ENCODE measurements at regions of chr4 and their contacts with region 1.

Region 1: DNA sequence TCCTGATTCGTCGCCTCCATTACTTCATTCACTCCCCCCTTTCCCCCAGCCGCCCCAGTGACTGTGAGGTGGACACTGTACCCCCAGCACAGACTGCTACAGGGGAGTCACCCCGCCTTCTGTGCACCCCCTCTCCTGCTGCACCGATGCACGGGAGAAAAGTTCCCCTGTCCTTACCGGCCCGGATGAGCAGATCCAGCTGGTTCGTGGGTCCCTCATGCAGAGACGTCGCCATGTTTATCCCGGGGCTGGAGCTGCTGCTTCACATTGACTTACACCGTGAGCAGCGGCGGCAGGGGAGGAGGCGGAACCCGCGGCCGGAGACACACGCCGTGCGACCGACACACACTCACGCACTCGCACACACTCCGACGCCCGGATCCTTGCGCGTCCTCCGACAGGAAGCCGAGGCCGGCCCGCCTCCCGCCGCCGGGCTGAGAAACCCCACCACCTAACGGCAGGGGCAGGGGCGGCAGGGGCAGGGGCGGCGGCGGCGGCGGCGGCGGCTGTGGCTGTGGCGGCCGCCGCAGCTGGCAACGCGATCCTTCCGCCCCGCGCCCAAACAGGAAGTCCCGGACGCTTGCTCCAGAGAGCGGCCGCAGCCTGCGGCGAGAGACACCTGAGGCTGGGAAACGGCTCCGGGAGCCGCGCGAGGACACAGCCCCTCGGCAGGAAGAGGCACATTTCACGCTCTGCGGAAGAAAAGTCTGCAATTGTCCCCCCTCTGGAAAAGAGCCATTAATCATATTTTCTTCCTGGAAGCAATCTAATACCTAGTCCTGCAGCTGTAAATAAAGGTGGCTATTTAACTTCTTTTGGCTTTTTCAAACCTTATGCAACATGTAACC is 68.6 kb downstream of the NOCT start:
- DNase-seq: peak; percentile 78
- H3K4me3 Mint-ChIP-seq: peak overlapping the region; percentile 86
- H3K27ac Mint-ChIP-seq: peak overlapping the region; percentile 98
- H3K4me1 Mint-ChIP-seq: peaks cover 28% of the 10 kb centered on the region
- H3K27me3 Mint-ChIP-seq: no peaks in the 10 kb centered on the region

Region 2: DNA sequence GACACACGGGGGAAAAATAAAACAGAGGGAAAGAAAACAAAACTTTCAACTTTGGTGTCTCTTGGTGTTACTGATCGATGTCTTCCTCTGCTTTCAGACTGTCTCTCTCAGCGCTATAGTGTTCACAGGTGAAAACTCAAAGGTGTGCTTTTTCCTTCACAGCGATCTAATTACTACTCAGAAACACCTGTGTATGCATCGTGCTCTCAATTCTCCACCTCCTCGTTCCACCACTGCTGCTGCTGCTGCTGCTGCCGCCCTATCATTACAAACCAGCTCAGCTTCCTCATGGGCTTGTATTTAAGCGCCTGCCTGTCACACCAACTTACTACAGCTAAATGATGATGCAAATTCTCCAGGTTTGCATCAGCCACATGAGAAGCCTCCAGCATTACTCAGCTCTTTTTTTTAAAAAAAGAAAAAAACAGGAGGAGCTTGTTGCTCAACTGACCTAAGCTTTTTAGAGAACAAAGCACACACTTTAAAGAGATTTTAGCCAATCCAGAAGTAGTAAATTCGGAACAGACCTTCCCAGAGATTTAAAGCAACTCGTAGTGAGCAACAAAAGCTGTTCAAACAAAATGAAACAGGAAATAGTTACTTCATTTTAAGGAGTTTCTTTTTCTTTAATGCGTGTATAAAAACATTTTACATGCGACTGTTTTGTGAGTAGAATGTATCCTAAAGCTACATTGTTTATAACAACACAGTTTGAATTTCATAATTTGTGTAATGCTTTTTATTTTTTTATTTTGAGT is 841.9 kb before region 1 on chr4 and contains the start of gene SLC7A11:
- intact Hi-C with region 1: loop called (anchors 5 kb)
- DNase-seq: peak; percentile 70
- H3K4me3 Mint-ChIP-seq: peak within 1 kb of the TSS; percentile 88
- H3K27ac Mint-ChIP-seq: peak within 1 kb of the TSS; percentile 83
- H3K4me1 Mint-ChIP-seq: peaks cover 32% of the 10 kb centered on the region
- H3K27me3 Mint-ChIP-seq: peaks cover 4% of the 10 kb centered on the region
- total RNA-seq, gene SLC7A11: 2.6 and 2.7 TPM in 2 replicates

Region 3: DNA sequence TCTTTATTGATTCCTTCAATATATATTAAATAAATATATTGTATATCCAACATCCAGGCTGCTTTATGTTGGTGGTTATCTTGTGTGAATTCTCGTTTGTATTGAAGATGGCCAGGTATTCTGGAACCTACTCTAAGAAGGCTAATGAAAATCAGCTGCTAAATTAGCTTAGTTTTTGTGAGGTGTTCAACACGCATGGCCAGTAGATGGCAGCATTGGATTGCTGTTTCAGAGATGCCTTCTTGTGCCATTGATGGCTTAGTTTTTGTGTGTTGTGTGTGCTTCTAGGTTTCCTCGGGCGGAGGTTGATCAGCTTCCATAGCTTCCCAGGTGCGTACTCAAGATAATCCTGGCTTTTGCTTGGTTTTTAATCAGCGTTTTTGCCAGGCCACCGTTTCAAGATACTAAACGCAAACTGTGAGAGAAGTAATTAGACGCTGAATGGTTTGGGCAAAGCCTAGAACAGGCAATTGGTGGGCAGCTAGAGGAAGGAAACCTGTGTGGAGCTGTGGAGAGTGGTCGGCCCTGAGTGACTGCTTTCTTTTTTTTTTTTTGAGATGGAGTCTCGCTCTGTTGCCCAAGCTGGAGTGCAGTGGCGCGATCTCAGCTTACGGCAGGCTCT is 53.5 kb before region 1 on chr4:
- intact Hi-C with region 1: loop called (anchors 1 kb)
- DNase-seq: peak; percentile 55
- H3K4me3 Mint-ChIP-seq: no peak overlapping the region
- H3K27ac Mint-ChIP-seq: no peak overlapping the region
- H3K4me1 Mint-ChIP-seq: peaks cover 15% of the 10 kb centered on the region
- H3K27me3 Mint-ChIP-seq: no peaks in the 10 kb centered on the region

Region 4: DNA sequence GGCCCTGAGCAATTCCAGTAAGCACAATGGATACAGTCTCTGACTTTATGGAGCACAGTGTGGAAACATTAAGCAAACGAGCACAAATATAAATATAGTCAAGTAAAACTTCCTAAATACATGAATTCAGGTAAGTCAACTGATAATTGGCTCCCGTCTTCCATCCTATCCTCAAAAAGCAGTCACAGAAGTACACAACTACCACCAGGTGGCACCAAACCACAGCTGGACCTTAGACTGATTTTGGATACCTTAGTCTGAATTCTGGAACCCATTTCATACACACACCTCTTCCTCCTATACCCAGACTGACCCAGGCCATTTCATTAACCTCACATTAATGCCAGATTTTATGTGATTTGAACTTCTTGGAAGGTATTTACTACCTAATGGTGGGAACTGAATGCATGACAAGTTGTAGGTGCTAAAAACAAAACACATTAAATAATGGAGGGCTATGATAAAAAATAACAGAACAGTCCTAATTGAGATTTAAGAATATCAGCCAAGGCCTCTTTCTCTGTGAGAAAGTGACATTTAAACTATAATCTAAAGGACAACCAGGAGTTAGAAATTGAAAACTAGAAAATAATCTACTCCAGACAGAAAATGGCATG is 15.3 kb after region 1 on chr4:
- intact Hi-C with region 1: loop called (anchors 2 kb)
- DNase-seq: peak; percentile 54
- H3K4me3 Mint-ChIP-seq: no peak overlapping the region
- H3K27ac Mint-ChIP-seq: no peak overlapping the region
- H3K4me1 Mint-ChIP-seq: no peaks in the 10 kb centered on the region
- H3K27me3 Mint-ChIP-seq: no peaks in the 10 kb centered on the region

Region 5: GRCh38 chr4:139301113-139301820 is 217.1 kb after region 1 on chr4 and contains the start of gene NAA15:
- intact Hi-C with region 1: loop called (anchors 1 kb)
- DNase-seq: peak; percentile 97
- H3K4me3 Mint-ChIP-seq: peak within 1 kb of the TSS; percentile 95
- H3K27ac Mint-ChIP-seq: peak within 1 kb of the TSS; percentile 97
- H3K4me1 Mint-ChIP-seq: peaks cover 69% of the 10 kb centered on the region
- H3K27me3 Mint-ChIP-seq: no peaks in the 10 kb centered on the region
- total RNA-seq, gene NAA15: 104 and 110 TPM in 2 replicates

Region 6: DNA sequence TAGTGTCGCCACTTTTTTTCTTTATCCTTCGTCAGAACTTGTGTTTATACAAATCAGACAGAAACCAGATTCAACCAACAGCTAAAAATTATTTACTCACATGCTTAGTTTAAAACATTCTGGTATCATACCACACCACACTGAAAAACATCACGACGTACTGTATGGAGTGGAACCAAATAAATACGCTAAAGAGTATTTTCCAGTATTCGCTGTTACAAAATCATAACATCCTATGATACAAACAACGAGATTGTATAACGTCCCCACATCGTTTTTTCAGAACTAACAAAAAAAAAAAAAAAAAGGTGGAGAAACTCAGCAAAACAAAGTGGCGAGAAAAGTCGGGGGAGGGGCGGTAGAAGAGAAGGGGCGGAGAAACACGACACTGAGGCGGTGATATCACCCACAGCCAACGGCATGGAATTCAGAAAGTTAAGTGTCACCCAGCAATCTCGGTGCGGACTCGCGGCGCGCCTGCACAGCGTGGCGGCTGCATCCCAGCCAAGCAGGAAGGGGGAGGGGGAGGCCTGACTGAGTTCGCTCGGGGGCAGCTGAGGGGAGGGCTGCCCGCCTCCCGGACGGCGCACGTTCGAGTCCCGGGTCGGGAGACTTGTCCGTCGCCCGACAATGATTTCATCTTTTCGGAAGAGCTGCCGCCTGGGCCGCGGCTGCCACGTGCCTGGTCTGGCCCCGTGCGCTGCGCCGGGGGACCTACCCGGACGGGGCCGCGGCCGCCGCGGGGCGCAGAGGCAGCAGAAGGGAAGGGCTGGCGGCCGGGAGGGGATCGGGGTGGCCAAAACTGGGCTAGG is 470.9 kb after region 1 on chr4:
- intact Hi-C with region 1: loop called (anchors 2 kb)
- DNase-seq: peak; percentile 78
- H3K4me3 Mint-ChIP-seq: peak overlapping the region; percentile 93
- H3K27ac Mint-ChIP-seq: peak overlapping the region; percentile 96
- H3K4me1 Mint-ChIP-seq: peaks cover 47% of the 10 kb centered on the region
- H3K27me3 Mint-ChIP-seq: peaks cover 13% of the 10 kb centered on the region